Left lung (tissue), 14 donors: ENCODE measurements at regions of chr12 and their contacts with region 1.

Region 1: GRCh38 chr12:120228291-120229070 is 27.6 kb upstream of the RPLP0 start:
- DNase-seq: peak; percentile 76 to 94 (median 90)
- ATAC-seq: peak; percentile 63
- H3K4me3 ChIP-seq: peak overlapping the region in 1 of 2 donors; percentile 21
- H3K27ac ChIP-seq: peak overlapping the region; percentile 28 to 91
- H3K4me1 ChIP-seq: peaks cover 62 to 100% of the 10 kb centered on the region in 2 donors
- H3K27me3 ChIP-seq: no peaks in the 10 kb centered on the region
- CTCF ChIP-seq: peak; percentile 78 to 96

Region 2: DNA sequence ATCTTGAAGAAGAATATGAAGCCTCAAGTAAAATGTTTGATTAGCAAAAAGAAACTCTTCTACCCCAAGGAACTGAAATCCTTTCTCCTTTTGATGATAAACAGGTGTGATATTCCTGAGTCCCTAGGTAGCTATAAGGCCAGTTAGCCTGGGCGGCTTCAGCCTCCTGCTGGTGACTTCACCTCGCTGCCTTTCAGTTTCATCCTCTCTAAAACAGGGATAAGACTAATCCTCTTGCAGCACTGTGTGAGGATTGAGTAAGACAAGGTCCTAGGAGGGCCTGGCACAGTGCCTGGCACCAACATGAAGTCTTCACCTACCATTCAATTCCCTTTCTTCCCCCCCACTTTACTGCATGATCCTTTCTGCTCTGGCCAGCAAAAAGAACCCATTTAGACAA is 393.4 kb before region 1 on chr12:
- intact Hi-C with region 1: no loop called
- DNase-seq: no peak
- ATAC-seq: no peak
- H3K4me3 ChIP-seq: no peak overlapping the region
- H3K27ac ChIP-seq: no peak overlapping the region
- H3K4me1 ChIP-seq: no peaks in the 10 kb centered on the region
- H3K27me3 ChIP-seq: no peaks in the 10 kb centered on the region
- CTCF ChIP-seq: no peak

Region 3: DNA sequence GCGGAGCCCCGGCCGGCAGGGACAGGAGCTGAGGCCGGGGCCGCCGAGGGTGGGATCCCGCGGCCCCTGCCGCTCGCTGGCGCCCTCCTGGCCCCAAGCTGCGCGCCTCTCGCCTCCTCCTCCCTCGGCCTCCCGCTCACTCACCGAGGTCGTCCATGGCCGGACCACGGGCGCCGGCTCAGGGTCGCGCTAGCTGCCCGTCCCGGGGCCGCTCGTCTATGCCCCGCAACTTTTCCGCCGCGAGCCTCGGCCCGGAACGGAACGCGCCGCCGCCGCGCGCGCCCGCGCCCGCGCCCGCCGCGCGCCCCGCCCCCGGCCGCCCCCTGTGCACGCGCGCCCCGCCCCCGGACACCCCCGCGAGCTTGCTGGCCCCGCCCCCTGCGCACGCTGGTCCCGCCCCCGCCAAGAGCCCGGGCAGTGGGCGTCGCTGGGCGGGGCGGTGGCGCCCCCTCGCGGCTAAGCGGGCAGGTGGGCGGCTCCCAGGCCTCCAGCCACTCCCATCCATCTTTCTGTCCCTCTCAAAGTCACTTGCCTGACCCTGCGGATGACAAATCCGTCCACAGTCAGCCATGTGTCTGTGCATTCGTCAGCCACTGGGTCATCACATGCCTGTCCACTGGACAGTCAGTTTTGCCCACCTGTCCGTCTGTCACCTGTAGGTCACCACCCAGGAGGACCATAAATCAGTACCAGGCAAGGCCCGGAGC is 37.1 kb after region 1 on chr12 and contains the start of gene PXN:
- intact Hi-C with region 1: loop called (anchors 5 kb)
- DNase-seq: peak; percentile 73 to 97 (median 90)
- ATAC-seq: peak; percentile 95
- H3K4me3 ChIP-seq: peak within 1 kb of the TSS; percentile 80 to 84
- H3K27ac ChIP-seq: peak within 1 kb of the TSS; percentile 84 to 91
- H3K4me1 ChIP-seq: peaks cover 32 to 64% of the 10 kb centered on the region in 2 donors
- H3K27me3 ChIP-seq: no peaks in the 10 kb centered on the region
- CTCF ChIP-seq: peak; percentile 80 to 94
- polyA plus RNA-seq, gene PXN: 56.5 to 71.3 (median 64.3) TPM